CD8-positive, alpha-beta T cell (primary cell): ENCODE measurements at regions of chr2 and their contacts with region 1.

Region 1: DNA sequence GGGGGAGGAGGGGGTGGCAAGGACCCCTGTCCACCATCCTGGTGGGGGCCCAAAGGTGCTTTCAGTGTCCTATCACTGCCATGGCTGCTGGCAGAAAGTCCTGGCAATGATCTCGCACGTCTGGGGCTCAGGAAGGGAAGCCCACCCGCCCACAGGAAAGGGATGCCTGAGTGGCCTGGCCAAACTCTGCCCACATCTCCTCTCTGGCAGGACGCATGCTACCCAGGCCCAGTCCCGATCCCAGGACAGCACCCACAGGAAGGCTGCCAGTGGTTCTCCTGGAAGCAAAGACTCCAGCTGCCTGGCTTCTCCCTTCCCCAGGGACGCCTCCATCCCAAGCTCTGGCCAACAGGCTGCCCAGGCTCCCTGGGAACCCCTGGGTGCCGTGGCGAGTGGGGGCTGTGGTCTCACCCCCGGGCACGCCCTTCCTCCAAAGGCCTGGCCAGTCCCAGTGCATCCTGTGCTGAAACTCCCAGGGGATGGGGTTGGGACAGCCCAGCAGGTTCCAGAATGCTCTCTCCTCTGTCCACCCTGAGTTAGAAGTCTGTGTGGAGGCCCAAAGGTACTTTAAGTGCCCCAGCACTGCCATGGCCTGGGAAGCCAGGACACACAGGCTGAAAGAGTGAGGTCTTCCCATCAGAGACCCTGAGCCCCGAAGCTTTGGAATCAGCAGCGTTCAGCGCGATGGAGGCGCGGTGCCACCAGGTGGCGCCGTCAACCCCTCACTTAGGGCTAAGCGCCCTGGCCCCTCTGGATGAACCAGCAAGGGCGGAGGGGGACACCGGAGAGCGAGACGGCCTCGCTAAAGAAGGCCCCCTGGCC is 29.8 kb upstream of the TAF1B start:
- DNase-seq: peak; percentile 34 to 79 (median 70)
- ATAC-seq: peak; percentile 89
- H3K4me3 ChIP-seq: no peak overlapping the region
- H3K4me3 Mint-ChIP-seq: no peak overlapping the region
- H3K27ac ChIP-seq: no peak overlapping the region
- H3K27ac Mint-ChIP-seq: no peak overlapping the region
- H3K4me1 ChIP-seq: peaks cover 4% of the 10 kb centered on the region
- H3K4me1 Mint-ChIP-seq: peaks cover 11% of the 10 kb centered on the region
- H3K27me3 ChIP-seq: no peaks in the 10 kb centered on the region
- H3K27me3 Mint-ChIP-seq: peaks cover 3% of the 10 kb centered on the region
- CTCF ChIP-seq: peak; percentile 85

Region 2: DNA sequence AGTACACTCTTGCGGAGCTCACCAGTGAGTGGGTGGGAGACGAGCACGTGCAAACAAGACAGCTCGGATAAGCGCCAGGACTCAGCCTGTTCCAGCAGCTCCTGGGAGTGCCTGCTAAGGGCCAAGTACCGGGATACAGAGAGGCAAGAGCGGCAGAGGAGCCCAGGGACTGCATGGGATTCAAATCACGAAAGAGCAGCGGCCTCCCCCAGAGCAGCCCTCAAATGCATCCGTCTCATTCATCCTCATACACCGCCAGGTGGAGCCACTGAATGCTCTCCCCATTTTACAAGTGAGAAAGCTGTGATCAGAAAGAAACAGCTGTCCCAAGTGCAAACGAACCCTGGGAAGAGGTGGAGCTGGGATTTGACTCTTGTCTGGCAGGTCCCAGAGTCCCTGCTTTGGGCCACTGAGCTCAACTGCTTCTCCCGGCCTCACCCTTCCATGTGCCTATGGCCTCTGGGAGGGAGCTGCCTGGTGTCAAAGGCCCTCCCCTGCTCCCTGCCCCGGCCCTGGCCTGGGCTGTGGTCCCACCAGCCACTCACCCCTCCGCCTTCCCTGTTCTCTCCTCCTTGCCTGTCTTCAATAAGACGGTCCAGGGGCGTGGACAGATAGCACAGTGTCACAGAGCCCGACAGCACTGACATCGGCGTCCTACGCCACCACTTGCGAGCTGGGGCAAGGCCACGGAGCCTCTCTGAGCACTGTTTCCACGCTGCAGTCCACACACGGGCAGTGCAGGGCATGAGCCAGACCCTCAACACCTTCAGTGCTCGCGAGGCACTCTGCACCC is 43.0 kb before region 1 on chr2:
- CTCF ChIA-PET with region 1: interaction called, 10 read pairs
- POLR2A ChIA-PET with region 1: no interaction called
- intact Hi-C with region 1: no loop called
- DNase-seq: peak in 8 of 9 experiments; percentile 16 to 68 (median 50)
- ATAC-seq: peak; percentile 48
- H3K4me3 ChIP-seq: no peak overlapping the region
- H3K4me3 Mint-ChIP-seq: no peak overlapping the region
- H3K27ac ChIP-seq: no peak overlapping the region
- H3K27ac Mint-ChIP-seq: no peak overlapping the region
- H3K4me1 ChIP-seq: no peaks in the 10 kb centered on the region
- H3K4me1 Mint-ChIP-seq: peaks cover 6% of the 10 kb centered on the region
- H3K27me3 ChIP-seq: no peaks in the 10 kb centered on the region
- H3K27me3 Mint-ChIP-seq: no peaks in the 10 kb centered on the region
- CTCF ChIP-seq: no peak

Region 3: DNA sequence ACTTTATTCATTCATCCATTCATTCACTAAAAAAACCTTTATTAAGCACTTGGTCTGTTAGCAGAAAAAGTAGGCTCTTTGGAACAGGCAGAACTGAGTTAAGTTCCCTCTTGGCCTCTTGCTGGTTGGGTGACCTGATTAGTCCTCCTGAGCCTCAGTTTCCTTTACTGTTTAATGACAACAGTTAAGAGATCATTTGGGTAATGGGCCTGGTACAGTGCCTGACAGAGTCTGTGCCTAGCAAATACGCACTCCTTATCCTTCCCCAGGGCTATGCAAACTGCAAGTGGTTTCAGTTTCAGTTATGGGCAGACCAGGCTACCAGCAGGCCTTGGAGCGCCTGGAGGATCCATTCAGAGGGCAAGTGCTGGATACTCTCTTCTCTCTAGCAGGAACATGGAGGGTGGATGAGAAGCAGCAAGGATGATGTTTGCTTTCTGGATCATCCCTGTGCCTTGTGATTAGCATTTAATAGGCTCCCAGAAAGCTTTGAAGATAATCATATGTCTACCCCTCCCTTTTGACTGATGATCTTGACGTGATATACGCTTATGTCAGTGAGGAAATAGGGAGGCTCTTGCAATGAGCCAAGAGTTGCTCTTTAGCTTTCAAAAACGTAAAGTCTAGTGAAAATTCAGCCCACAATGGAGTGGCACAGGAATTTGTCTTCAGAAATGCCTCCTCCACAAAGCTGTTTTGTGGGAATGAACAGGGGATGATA is 17.3 kb after region 1 on chr2:
- CTCF ChIA-PET with region 1: interaction called, 11 read pairs
- POLR2A ChIA-PET with region 1: no interaction called
- intact Hi-C with region 1: no loop called
- DNase-seq: no peak
- ATAC-seq: no peak
- H3K4me3 ChIP-seq: no peak overlapping the region
- H3K4me3 Mint-ChIP-seq: no peak overlapping the region
- H3K27ac ChIP-seq: no peak overlapping the region
- H3K27ac Mint-ChIP-seq: no peak overlapping the region
- H3K4me1 ChIP-seq: no peaks in the 10 kb centered on the region
- H3K4me1 Mint-ChIP-seq: no peaks in the 10 kb centered on the region
- H3K27me3 ChIP-seq: peaks cover 0 to 2% of the 10 kb centered on the region in 2 experiments
- H3K27me3 Mint-ChIP-seq: peaks cover 2% of the 10 kb centered on the region
- CTCF ChIP-seq: no peak

Region 4: DNA sequence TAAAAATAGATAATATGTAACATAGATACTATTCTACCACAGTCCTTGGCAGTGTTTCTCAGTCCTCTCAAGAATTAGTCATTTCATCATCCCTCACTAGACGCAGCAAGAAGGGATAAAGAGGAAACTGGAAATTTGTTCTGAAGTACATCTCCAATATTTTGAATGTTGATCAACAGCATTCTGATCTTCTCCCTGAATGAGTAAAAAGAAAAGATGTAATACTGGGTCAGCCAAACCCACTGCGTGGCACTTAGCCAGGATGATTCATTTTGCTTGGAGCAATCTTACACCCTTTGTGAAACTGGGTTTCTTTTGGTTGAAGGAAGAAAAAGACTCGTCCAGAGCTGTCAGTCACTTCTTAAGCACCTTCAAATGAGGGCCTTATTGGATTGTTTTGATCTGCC is 83.8 kb after region 1 on chr2:
- CTCF ChIA-PET with region 1: interaction called, 3 read pairs
- POLR2A ChIA-PET with region 1: no interaction called
- intact Hi-C with region 1: loop called in 1 of 2 experiments (anchors 10 kb)
- DNase-seq: no peak
- ATAC-seq: no peak
- H3K4me3 ChIP-seq: no peak overlapping the region
- H3K4me3 Mint-ChIP-seq: no peak overlapping the region
- H3K27ac ChIP-seq: no peak overlapping the region
- H3K27ac Mint-ChIP-seq: no peak overlapping the region
- H3K4me1 ChIP-seq: no peaks in the 10 kb centered on the region
- H3K4me1 Mint-ChIP-seq: peaks cover 12% of the 10 kb centered on the region
- H3K27me3 ChIP-seq: no peaks in the 10 kb centered on the region
- H3K27me3 Mint-ChIP-seq: no peaks in the 10 kb centered on the region
- CTCF ChIP-seq: no peak

Region 5: GRCh38 chr2:10434886-10435819 is 621.6 kb after region 1 on chr2:
- CTCF ChIA-PET with region 1: interaction called, 12 read pairs
- POLR2A ChIA-PET with region 1: no interaction called
- intact Hi-C with region 1: loop called in 1 of 2 experiments (anchors 2 kb)
- DNase-seq: peak; percentile 51 to 86 (median 74)
- ATAC-seq: peak; percentile 74
- H3K4me3 ChIP-seq: no peak overlapping the region
- H3K4me3 Mint-ChIP-seq: no peak overlapping the region
- H3K27ac ChIP-seq: no peak overlapping the region
- H3K27ac Mint-ChIP-seq: no peak overlapping the region
- H3K4me1 ChIP-seq: peaks cover 14% of the 10 kb centered on the region
- H3K4me1 Mint-ChIP-seq: peaks cover 16% of the 10 kb centered on the region
- H3K27me3 ChIP-seq: peaks cover 0 to 4% of the 10 kb centered on the region in 2 experiments
- H3K27me3 Mint-ChIP-seq: peaks cover 2% of the 10 kb centered on the region
- CTCF ChIP-seq: peak; percentile 93